ENCODE measurements at regions of chr17 and their contacts with region 1.

Region 1: GRCh38 chr17:409848-410545 is 57.4 kb upstream of the RPH3AL start:
- DNase-seq: peak; percentile 100
- ATAC-seq: peak; percentile 71
- H3K4me3 Mint-ChIP-seq: peak overlapping the region; percentile 77
- H3K27ac Mint-ChIP-seq: peak overlapping the region; percentile 82
- H3K4me1 Mint-ChIP-seq: peaks cover 54% of the 10 kb centered on the region
- H3K27me3 Mint-ChIP-seq: peaks cover 2% of the 10 kb centered on the region

Region 2: GRCh38 chr17:352421-353212 is 57.4 kb before region 1 on chr17 and contains the start of gene RPH3AL:
- CTCF ChIA-PET with region 1: no interaction called
- POLR2A ChIA-PET with region 1: no interaction called
- intact Hi-C with region 1: no loop called
- DNase-seq: no peak
- ATAC-seq: no peak
- H3K4me3 Mint-ChIP-seq: no peak within 1 kb of the TSS
- H3K27ac Mint-ChIP-seq: no peak within 1 kb of the TSS
- H3K4me1 Mint-ChIP-seq: no peaks in the 10 kb centered on the region
- H3K27me3 Mint-ChIP-seq: no peaks in the 10 kb centered on the region
- total RNA-seq, gene RPH3AL: 1.4 to 2.0 TPM

Region 3: GRCh38 chr17:385926-386876 is 23.8 kb before region 1 on chr17:
- CTCF ChIA-PET with region 1: no interaction called
- POLR2A ChIA-PET with region 1: no interaction called
- intact Hi-C with region 1: loop called in 1 of 2 experiments (anchors 1 kb)
- DNase-seq: peak; percentile 82
- ATAC-seq: peak; percentile 63
- H3K4me3 Mint-ChIP-seq: peak overlapping the region; percentile 70
- H3K27ac Mint-ChIP-seq: no peak overlapping the region
- H3K4me1 Mint-ChIP-seq: peaks cover 7% of the 10 kb centered on the region
- H3K27me3 Mint-ChIP-seq: peaks cover 15% of the 10 kb centered on the region

Region 4: DNA sequence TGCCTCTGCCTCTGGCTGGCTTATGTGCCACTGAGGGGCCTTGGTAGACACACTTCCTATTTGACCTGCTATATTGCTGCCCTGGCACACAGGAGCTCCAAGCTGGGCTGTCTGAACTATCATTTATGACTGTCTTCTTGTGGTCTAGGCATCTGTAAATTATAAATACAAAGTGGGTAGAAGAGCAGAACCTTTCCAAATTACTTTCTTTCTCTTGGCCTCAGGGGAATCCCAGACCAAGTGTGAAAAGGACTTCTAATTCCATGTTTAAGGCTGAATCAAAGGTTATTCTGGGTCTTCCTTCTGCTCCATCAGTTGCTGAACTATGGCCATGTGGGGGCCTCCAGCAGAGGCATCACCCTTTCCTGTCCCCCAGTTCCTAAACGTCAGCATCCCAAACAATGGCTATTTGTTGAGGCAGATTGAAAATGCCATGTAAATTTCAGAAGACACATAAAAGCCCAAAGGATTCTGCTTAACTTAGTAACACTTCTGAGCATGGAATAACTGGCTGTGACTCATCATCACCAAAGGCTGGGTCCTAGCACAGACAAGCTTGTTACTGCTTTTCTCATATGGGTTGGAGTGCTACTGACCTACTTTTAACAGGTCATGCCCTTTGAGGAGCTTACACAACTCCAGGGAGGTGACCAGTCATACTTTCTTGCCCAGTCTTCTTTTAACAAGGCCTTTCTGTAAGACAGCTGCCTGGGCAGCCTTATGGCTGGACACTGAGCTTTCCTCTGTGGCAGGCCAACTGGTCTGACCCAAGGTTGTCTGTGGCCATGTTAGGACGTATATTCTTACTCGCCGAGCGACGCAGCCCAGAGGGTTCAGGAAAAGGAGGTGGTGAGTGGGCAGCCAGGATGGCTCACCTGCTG is 149.8 kb after region 1 on chr17:
- CTCF ChIA-PET with region 1: interaction called, 4 read pairs
- POLR2A ChIA-PET with region 1: no interaction called
- intact Hi-C with region 1: loop called (anchors 5 kb)
- DNase-seq: no peak
- ATAC-seq: peak; percentile 61
- H3K4me3 Mint-ChIP-seq: no peak overlapping the region
- H3K27ac Mint-ChIP-seq: no peak overlapping the region
- H3K4me1 Mint-ChIP-seq: peaks cover 16% of the 10 kb centered on the region
- H3K27me3 Mint-ChIP-seq: no peaks in the 10 kb centered on the region

Region 5: GRCh38 chr17:700504-701094 is 290.6 kb after region 1 on chr17:
- CTCF ChIA-PET with region 1: interaction called, 68 read pairs
- POLR2A ChIA-PET with region 1: interaction called, 5 read pairs
- intact Hi-C with region 1: loop called (anchors 1 kb)
- DNase-seq: no peak
- ATAC-seq: peak; percentile 65
- H3K4me3 Mint-ChIP-seq: no peak overlapping the region
- H3K27ac Mint-ChIP-seq: no peak overlapping the region
- H3K4me1 Mint-ChIP-seq: no peaks in the 10 kb centered on the region
- H3K27me3 Mint-ChIP-seq: no peaks in the 10 kb centered on the region

Region 6: DNA sequence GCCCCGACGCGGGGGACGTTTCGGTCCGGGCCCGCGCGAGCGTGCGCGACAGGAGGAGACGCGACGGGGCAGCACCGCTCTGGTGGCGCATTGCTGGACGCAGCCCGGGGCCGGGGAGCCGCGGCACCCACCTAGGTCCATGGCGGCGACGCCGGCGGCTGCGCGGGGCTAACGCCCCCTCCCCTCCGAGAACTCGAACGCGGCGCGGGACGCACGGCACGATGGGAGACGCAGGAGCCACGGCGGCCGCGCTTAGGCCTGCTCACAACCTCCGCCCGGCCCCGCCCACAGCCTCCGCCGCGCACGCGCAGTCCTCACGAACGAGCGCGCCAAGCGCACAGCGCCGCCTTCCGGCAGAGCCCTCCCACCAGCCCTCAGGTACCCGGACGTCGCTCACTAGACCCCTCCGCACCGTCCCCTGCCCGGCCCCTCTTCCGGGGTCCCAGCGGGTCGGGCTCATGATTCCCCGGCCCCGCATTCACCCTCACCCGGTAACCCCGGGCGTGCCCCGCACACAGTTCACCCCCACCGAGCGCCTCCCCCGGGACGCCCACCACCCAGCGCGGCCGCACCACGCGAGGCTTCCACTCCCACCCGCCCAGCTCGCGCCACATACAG is 342.1 kb after region 1 on chr17 and contains the start of gene GEMIN4:
- CTCF ChIA-PET with region 1: interaction called, 3 read pairs
- POLR2A ChIA-PET with region 1: no interaction called
- intact Hi-C with region 1: loop called (anchors 1 to 5 kb)
- DNase-seq: peak; percentile 99
- ATAC-seq: peak; percentile 86
- H3K4me3 Mint-ChIP-seq: peak within 1 kb of the TSS; percentile 99
- H3K27ac Mint-ChIP-seq: peak within 1 kb of the TSS; percentile 97
- H3K4me1 Mint-ChIP-seq: peaks cover 32% of the 10 kb centered on the region
- H3K27me3 Mint-ChIP-seq: no peaks in the 10 kb centered on the region
- total RNA-seq, gene GEMIN4: 49.7 to 56.1 TPM

Region 7: DNA sequence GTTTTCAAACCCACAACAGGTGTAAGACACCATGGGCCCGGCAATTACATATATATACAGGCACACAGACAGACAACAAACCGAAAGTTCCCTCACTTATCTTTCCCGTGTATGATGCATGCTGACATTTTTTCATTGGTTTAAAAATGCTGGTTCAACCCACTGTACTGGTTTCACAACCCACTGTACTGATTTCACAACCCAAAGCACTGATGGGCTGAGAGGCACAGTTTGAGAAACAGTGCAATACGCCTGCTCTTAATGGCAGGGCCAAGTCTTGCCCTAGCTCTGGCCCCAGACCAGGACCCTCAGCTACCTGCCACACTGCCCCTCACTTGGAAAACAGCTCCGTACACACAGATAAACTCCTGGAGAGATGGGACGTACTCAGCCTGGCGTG is 688.4 kb after region 1 on chr17:
- CTCF ChIA-PET with region 1: no interaction called
- POLR2A ChIA-PET with region 1: no interaction called
- intact Hi-C with region 1: no loop called
- DNase-seq: no peak
- ATAC-seq: peak; percentile 90
- H3K4me3 Mint-ChIP-seq: no peak overlapping the region
- H3K27ac Mint-ChIP-seq: peak overlapping the region; percentile 37
- H3K4me1 Mint-ChIP-seq: peaks cover 27% of the 10 kb centered on the region
- H3K27me3 Mint-ChIP-seq: no peaks in the 10 kb centered on the region

Measured in activated CD4-positive, alpha-beta T cell treated with anti-CD3 and anti-CD28 coated beads for 36 hours (primary cell).